Panc1 (cell line): ENCODE measurements at regions of chr17 and their contacts with region 1.

Region 1: DNA sequence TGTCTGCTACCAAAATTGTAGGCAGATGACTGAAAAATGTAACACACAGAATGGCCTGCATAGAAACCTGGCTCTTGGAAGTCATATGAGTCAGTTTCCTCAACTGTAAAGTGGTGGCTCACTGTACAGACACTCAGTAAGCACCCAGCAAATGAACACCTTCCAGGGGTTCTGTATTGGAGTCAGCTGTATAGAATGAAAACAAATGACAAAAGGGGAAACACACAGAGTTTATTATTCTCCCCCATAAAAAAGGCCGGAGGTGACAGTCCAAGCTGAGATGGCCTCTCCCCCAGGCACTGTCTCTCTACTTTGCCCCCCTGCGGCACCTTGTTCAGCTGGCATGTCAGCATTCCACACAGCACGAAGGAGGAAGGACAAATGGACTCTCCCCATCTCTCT is 6.2 kb upstream of the MEOX1 start:
- DNase-seq: no peak
- ATAC-seq: peak; percentile 62; the same call in 1 of the 2 replicates
- H3K4me3 ChIP-seq: no peak overlapping the region
- H3K27ac ChIP-seq: no peak overlapping the region
- H3K4me1 ChIP-seq: peaks cover 15% of the 10 kb centered on the region
- H3K27me3 ChIP-seq: no peaks in the 10 kb centered on the region
- CTCF ChIP-seq: no peak

Region 2: GRCh38 chr17:43418441-43419374 is 249.2 kb before region 1 on chr17:
- CTCF ChIA-PET with region 1: no interaction called
- POLR2A ChIA-PET with region 1: interaction called, 10 read pairs
- in situ Hi-C with region 1: no loop called
- intact Hi-C with region 1: no loop called
- DNase-seq: no peak
- ATAC-seq: peak; percentile 99
- H3K4me3 ChIP-seq: peak overlapping the region in 1 of 2 experiments; percentile 35; a peak in 2 of 4 replicates
- H3K27ac ChIP-seq: no peak overlapping the region
- H3K4me1 ChIP-seq: peaks cover 16% of the 10 kb centered on the region
- H3K27me3 ChIP-seq: no peaks in the 10 kb centered on the region
- CTCF ChIP-seq: no peak